ENCODE measurements at regions of chr5 and their contacts with region 1.

Region 1: GRCh38 chr5:56717253-56717987 is 97.9 kb upstream of the MAP3K1 start:
- DNase-seq: peak in 1 of 2 experiments; percentile 18
- H3K4me3 ChIP-seq: no peak overlapping the region
- H3K27ac ChIP-seq: no peak overlapping the region
- H3K4me1 ChIP-seq: no peaks in the 10 kb centered on the region
- H3K27me3 ChIP-seq: no peaks in the 10 kb centered on the region
- CTCF ChIP-seq: no peak

Region 2: DNA sequence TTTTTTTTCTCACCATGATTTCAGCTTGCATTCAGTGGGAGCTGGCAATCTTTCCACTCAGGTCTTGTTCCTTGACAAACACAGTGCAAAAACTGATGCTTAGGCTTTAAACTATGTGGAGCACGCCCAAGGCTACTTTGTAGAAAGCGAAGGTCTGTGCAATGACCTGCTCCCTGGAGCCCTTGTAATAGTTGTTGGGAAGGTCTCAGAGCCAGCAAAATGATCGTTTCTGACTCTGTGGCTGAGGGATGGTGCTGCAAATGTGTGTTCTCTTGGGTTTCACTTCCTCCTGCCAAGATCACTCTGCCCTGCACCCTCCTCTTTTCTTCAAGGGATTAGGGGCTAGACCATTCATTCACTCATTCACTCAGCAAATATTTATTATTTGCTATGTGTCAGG is 151.8 kb before region 1 on chr5:
- CTCF ChIA-PET with region 1: no interaction called
- POLR2A ChIA-PET with region 1: no interaction called
- intact Hi-C with region 1: no loop called
- DNase-seq: no peak
- H3K4me3 ChIP-seq: no peak overlapping the region
- H3K27ac ChIP-seq: no peak overlapping the region
- H3K4me1 ChIP-seq: peaks cover 23% of the 10 kb centered on the region
- H3K27me3 ChIP-seq: no peaks in the 10 kb centered on the region
- CTCF ChIP-seq: no peak

Region 3: DNA sequence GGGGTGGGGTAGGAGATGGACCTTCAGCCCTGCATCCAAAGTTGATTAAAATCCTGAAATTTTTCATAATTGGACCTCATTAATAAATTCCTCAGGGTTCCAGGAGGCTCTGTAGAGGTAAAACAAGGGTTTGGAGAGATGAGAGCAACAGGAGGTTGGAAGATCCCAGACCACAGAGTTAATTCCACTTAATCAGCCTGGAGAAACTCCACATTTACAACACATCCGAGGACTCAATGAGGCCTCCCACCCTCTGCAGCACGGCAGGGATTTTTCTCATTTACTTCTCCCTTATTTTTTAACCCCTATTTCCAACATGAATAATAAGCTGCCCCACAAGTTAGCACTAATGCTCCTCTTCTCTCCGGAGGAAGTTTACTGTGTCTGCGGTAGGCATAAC is 67.0 kb before region 1 on chr5:
- CTCF ChIA-PET with region 1: no interaction called
- POLR2A ChIA-PET with region 1: interaction called, 13 read pairs
- intact Hi-C with region 1: no loop called
- DNase-seq: no peak
- H3K4me3 ChIP-seq: no peak overlapping the region
- H3K27ac ChIP-seq: no peak overlapping the region
- H3K4me1 ChIP-seq: peaks cover under 1% of the 10 kb centered on the region; the same call in 1 of the 2 replicates
- H3K27me3 ChIP-seq: no peaks in the 10 kb centered on the region
- CTCF ChIP-seq: no peak